Breast epithelium (tissue), 4 donors: ENCODE measurements at regions of chr15 and their contacts with region 1.

Region 1: DNA sequence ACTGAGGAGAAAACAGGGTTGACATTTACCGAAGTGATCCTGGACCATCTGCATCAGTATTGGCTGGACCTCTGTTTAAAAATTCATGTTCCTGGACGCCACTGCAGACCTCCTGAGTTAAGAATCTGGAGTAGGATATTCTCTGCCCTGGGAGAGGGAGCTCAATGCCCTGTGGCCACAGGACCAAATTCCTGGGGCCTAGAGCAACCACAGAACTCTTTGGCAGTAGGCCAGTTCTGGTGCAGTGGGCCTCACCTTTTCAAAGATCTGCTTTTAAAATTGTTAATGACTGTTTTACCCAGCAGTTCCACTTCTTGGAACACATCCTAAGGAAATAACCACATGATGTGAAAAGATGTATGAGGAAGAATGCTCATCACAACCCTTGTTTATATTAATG is 133.3 kb upstream of the ADPGK start:
- DNase-seq: no peak
- H3K4me3 ChIP-seq: no peak overlapping the region
- H3K27ac ChIP-seq: no peak overlapping the region
- H3K4me1 ChIP-seq: no peaks in the 10 kb centered on the region
- H3K27me3 ChIP-seq: no peaks in the 10 kb centered on the region
- CTCF ChIP-seq: no peak
- POLR2A ChIP-seq: no peak

Region 2: DNA sequence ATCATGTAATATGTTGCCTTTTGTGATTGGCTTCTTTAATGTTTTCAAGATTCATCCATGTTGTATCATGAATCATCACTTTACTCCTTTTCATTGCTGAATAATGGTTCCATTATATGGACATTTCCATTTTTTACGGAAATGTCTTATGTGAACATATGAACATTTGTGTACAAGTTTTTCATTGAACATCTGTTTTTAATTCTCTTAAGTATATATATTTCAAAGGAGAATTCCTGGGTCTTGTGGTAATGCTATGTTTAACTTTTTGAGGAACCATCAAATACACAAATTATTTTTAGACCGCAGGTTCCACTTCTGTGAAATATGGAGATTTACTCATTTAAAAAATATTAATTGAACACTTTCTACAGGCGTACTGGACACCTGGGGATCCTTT is 357.1 kb before region 1 on chr15:
- intact Hi-C with region 1: loop called (anchors 10 kb)
- DNase-seq: no peak
- H3K4me3 ChIP-seq: no peak overlapping the region
- H3K27ac ChIP-seq: no peak overlapping the region
- H3K4me1 ChIP-seq: no peaks in the 10 kb centered on the region
- H3K27me3 ChIP-seq: no peaks in the 10 kb centered on the region
- CTCF ChIP-seq: no peak
- POLR2A ChIP-seq: no peak

Region 3: GRCh38 chr15:73464602-73465001 is 547.7 kb after region 1 on chr15:
- intact Hi-C with region 1: no loop called
- DNase-seq: no peak
- H3K4me3 ChIP-seq: no peak overlapping the region
- H3K27ac ChIP-seq: no peak overlapping the region
- H3K4me1 ChIP-seq: no peaks in the 10 kb centered on the region
- H3K27me3 ChIP-seq: no peaks in the 10 kb centered on the region
- CTCF ChIP-seq: no peak
- POLR2A ChIP-seq: no peak